ENCODE measurements at regions of chr12 and their contacts with region 1.

Region 1: DNA sequence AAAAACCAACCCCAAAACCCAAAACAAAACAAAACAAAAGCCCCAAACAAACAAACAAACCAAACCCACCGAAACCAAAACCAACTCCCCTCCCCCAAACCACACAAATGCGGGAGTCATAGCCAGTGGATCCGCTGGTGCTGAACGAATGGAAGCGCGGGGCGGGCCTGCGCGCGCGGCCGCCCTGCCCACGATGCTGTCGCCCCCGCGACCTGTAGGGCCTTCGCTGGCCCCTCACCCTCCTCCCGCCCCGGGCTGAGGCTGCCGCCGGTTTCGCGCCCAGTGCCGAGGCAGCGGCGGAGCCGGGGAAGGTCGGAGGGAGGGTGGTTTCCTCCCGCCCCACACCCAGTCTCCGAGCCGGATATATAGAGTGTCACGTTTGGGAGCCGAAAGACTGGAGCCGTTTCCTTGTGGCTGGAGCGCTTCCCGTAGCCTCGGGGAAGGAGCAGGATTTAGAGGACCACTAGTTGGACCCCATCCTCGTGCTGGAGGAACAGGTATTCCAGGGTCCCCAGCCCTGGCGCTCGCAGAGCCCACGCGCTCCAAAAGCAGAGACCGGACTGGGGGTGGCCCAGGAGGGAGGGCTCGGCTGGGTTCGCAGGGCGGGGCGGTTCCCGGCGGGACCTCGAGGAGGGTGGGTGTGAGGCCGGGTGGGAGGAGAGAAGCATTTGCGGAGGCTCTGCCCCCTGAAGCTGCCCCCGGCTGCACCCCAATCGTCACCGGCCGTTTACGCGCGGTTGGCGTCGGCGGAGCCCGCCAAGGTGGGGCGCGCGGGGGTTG is at the start of gene FAR2:
- DNase-seq: peak; percentile 5 to 64 (median 27)
- ATAC-seq: peak; percentile 68
- H3K4me3 ChIP-seq: peak within 1 kb of the TSS; percentile 59 to 71
- H3K4me3 Mint-ChIP-seq: peak within 1 kb of the TSS; percentile 88
- H3K27ac ChIP-seq: peak within 1 kb of the TSS in 1 of 2 experiments; percentile 14
- H3K27ac Mint-ChIP-seq: peak within 1 kb of the TSS; percentile 68
- H3K4me1 ChIP-seq: peaks cover 13% of the 10 kb centered on the region
- H3K4me1 Mint-ChIP-seq: peaks cover 13% of the 10 kb centered on the region
- H3K27me3 ChIP-seq: peaks cover 0 to 8% of the 10 kb centered on the region in 2 experiments
- H3K27me3 Mint-ChIP-seq: peaks cover 8% of the 10 kb centered on the region
- CTCF ChIP-seq: no peak
- total RNA-seq, gene FAR2: 0.24 to 0.86 TPM

Region 2: GRCh38 chr12:28145216-28145615 is 1003.9 kb before region 1 on chr12:
- CTCF ChIA-PET with region 1: no interaction called
- POLR2A ChIA-PET with region 1: no interaction called
- intact Hi-C with region 1: no loop called
- DNase-seq: no peak
- ATAC-seq: no peak
- H3K4me3 ChIP-seq: no peak overlapping the region
- H3K4me3 Mint-ChIP-seq: no peak overlapping the region
- H3K27ac ChIP-seq: no peak overlapping the region
- H3K27ac Mint-ChIP-seq: no peak overlapping the region
- H3K4me1 ChIP-seq: no peaks in the 10 kb centered on the region
- H3K4me1 Mint-ChIP-seq: no peaks in the 10 kb centered on the region
- H3K27me3 ChIP-seq: no peaks in the 10 kb centered on the region
- H3K27me3 Mint-ChIP-seq: peaks cover 7% of the 10 kb centered on the region
- CTCF ChIP-seq: no peak

Region 3: GRCh38 chr12:29012673-29013072 is 136.4 kb before region 1 on chr12:
- CTCF ChIA-PET with region 1: no interaction called
- POLR2A ChIA-PET with region 1: no interaction called
- intact Hi-C with region 1: no loop called
- DNase-seq: no peak
- ATAC-seq: no peak
- H3K4me3 ChIP-seq: no peak overlapping the region
- H3K4me3 Mint-ChIP-seq: no peak overlapping the region
- H3K27ac ChIP-seq: no peak overlapping the region
- H3K27ac Mint-ChIP-seq: no peak overlapping the region
- H3K4me1 ChIP-seq: no peaks in the 10 kb centered on the region
- H3K4me1 Mint-ChIP-seq: no peaks in the 10 kb centered on the region
- H3K27me3 ChIP-seq: no peaks in the 10 kb centered on the region
- H3K27me3 Mint-ChIP-seq: peaks cover 2% of the 10 kb centered on the region
- CTCF ChIP-seq: no peak

Region 4: GRCh38 chr12:29103539-29103974 is 45.5 kb before region 1 on chr12:
- CTCF ChIA-PET with region 1: no interaction called
- POLR2A ChIA-PET with region 1: interaction called, 3 read pairs
- intact Hi-C with region 1: loop called in 1 of 2 experiments (anchors 5 kb)
- DNase-seq: peak in 7 of 9 experiments; percentile 10 to 87 (median 44)
- ATAC-seq: peak; percentile 88
- H3K4me3 ChIP-seq: peak overlapping the region; percentile 7 to 33
- H3K4me3 Mint-ChIP-seq: peak overlapping the region; percentile 72
- H3K27ac ChIP-seq: peak overlapping the region; percentile 39 to 73
- H3K27ac Mint-ChIP-seq: peak overlapping the region; percentile 95
- H3K4me1 ChIP-seq: peaks cover 29% of the 10 kb centered on the region
- H3K4me1 Mint-ChIP-seq: peaks cover 39% of the 10 kb centered on the region
- H3K27me3 ChIP-seq: no peaks in the 10 kb centered on the region
- H3K27me3 Mint-ChIP-seq: no peaks in the 10 kb centered on the region
- CTCF ChIP-seq: no peak

Region 5: DNA sequence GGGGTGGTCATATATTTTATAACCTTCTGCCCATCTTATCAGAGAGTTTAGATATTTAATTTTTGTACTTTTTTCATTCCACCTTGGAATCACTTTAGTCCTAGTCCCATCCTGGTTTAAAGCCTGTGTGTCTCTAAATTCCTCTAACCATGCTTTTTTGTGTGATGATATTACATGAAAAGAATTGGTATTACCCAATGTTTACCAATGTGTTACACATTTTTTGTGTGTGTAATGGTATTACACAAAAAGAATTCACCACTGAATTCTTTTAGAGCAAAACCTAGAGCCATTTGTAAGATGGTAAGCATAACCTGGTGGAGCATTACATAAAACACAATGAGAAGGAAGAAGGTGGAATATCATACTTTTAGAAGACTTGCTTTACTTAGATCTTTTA is 77.5 kb after region 1 on chr12:
- CTCF ChIA-PET with region 1: no interaction called
- POLR2A ChIA-PET with region 1: no interaction called
- intact Hi-C with region 1: no loop called
- DNase-seq: no peak
- ATAC-seq: no peak
- H3K4me3 ChIP-seq: no peak overlapping the region
- H3K4me3 Mint-ChIP-seq: no peak overlapping the region
- H3K27ac ChIP-seq: no peak overlapping the region
- H3K27ac Mint-ChIP-seq: no peak overlapping the region
- H3K4me1 ChIP-seq: no peaks in the 10 kb centered on the region
- H3K4me1 Mint-ChIP-seq: no peaks in the 10 kb centered on the region
- H3K27me3 ChIP-seq: no peaks in the 10 kb centered on the region
- H3K27me3 Mint-ChIP-seq: no peaks in the 10 kb centered on the region
- CTCF ChIP-seq: no peak